ENCODE measurements at regions of chr4 and their contacts with region 1.

Region 1: GRCh38 chr4:81471588-81472288 is at the start of gene RASGEF1B:
- DNase-seq: peak; percentile 84 to 98 (median 92)
- ATAC-seq: peak; percentile 84
- H3K4me3 ChIP-seq: peak within 1 kb of the TSS; percentile 85
- H3K4me3 Mint-ChIP-seq: peak within 1 kb of the TSS; percentile 94
- H3K27ac ChIP-seq: peak within 1 kb of the TSS; percentile 96
- H3K27ac Mint-ChIP-seq: peak within 1 kb of the TSS; percentile 91
- H3K4me1 ChIP-seq: peaks cover 31% of the 10 kb centered on the region
- H3K4me1 Mint-ChIP-seq: peaks cover 41% of the 10 kb centered on the region
- H3K27me3 ChIP-seq: no peaks in the 10 kb centered on the region
- H3K27me3 Mint-ChIP-seq: no peaks in the 10 kb centered on the region
- CTCF ChIP-seq: no peak
- total RNA-seq, gene RASGEF1B: 69.4 to 73.1 TPM

Region 2: DNA sequence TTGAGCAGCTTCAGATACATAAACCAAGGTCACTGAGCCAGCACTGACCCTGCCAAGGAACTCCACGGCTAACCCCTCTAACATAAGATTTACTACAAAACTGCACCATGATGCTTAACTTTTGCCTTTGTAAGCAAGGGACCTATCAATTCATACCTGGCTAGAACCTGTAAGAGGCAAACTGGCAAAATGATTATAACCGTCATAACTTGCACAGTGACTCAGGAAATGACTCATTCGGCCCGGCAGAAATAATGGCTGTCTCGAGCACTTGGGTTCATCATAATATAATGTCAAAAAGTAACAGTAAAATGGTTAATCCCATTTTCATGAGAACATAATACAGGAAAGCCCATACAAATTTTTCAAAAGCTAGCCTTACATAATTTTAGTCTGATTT is 17.2 kb before region 1 on chr4:
- CTCF ChIA-PET with region 1: interaction called, 11 read pairs
- POLR2A ChIA-PET with region 1: interaction called, 3 read pairs
- intact Hi-C with region 1: no loop called
- DNase-seq: peak in 5 of 14 experiments; percentile 23 to 49 (median 46)
- ATAC-seq: peak; percentile 67
- H3K4me3 ChIP-seq: no peak overlapping the region
- H3K4me3 Mint-ChIP-seq: no peak overlapping the region
- H3K27ac ChIP-seq: no peak overlapping the region
- H3K27ac Mint-ChIP-seq: peak overlapping the region; percentile 22
- H3K4me1 ChIP-seq: no peaks in the 10 kb centered on the region
- H3K4me1 Mint-ChIP-seq: peaks cover 14% of the 10 kb centered on the region
- H3K27me3 ChIP-seq: no peaks in the 10 kb centered on the region
- H3K27me3 Mint-ChIP-seq: no peaks in the 10 kb centered on the region
- CTCF ChIP-seq: no peak

Region 3: DNA sequence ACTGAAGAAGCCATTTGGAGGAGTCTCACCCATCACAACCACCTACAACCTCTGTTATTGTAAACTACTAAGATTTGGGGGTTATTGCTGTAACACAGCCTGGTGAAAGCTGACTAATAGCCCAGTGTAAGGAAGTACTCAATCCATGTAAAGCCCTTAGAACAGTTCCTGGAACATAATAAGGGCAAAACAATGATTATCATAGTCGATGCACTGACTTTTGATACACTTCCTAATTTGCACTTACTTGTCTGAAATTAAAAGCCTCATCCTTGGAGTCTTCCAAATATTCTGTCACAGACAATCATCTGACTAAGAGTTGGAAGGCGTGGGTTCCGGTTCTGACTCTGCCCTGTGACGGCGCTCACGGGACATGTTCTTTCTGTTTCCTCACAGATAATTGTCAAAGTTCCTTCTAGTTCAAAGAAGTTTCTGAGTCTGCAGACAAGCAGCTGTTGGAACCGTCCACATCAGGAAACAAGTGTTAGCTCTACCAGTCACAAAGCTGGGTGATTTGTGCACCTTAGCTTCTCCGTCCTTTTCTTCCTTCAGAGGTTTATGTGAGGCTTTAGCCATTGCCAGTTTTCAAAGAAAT is 33.4 kb after region 1 on chr4:
- CTCF ChIA-PET with region 1: interaction called, 8 read pairs
- POLR2A ChIA-PET with region 1: interaction called, 31 read pairs
- intact Hi-C with region 1: loop called in 1 of 2 experiments (anchors 1 kb)
- DNase-seq: peak; percentile 27 to 85 (median 58)
- ATAC-seq: peak; percentile 89
- H3K4me3 ChIP-seq: no peak overlapping the region
- H3K4me3 Mint-ChIP-seq: peak overlapping the region; percentile 52
- H3K27ac ChIP-seq: peak overlapping the region; percentile 47 to 71
- H3K27ac Mint-ChIP-seq: peak overlapping the region; percentile 89
- H3K4me1 ChIP-seq: peaks cover 30% of the 10 kb centered on the region
- H3K4me1 Mint-ChIP-seq: peaks cover 32% of the 10 kb centered on the region
- H3K27me3 ChIP-seq: no peaks in the 10 kb centered on the region
- H3K27me3 Mint-ChIP-seq: no peaks in the 10 kb centered on the region
- CTCF ChIP-seq: no peak

Region 4: GRCh38 chr4:81648576-81649275 is 177.0 kb after region 1 on chr4:
- CTCF ChIA-PET with region 1: interaction called, 4 read pairs
- POLR2A ChIA-PET with region 1: no interaction called
- intact Hi-C with region 1: loop called in 1 of 2 experiments (anchors 10 kb)
- DNase-seq: peak in 11 of 14 experiments; percentile 4 to 67 (median 24)
- ATAC-seq: peak; percentile 96
- H3K4me3 ChIP-seq: no peak overlapping the region
- H3K4me3 Mint-ChIP-seq: peak overlapping the region; percentile 3
- H3K27ac ChIP-seq: no peak overlapping the region
- H3K27ac Mint-ChIP-seq: peak overlapping the region; percentile 5
- H3K4me1 ChIP-seq: peaks cover 4% of the 10 kb centered on the region
- H3K4me1 Mint-ChIP-seq: peaks cover 55% of the 10 kb centered on the region
- H3K27me3 ChIP-seq: no peaks in the 10 kb centered on the region
- H3K27me3 Mint-ChIP-seq: no peaks in the 10 kb centered on the region
- CTCF ChIP-seq: no peak

Region 5: GRCh38 chr4:81844717-81845116 is 373.0 kb after region 1 on chr4:
- CTCF ChIA-PET with region 1: interaction called, 17 read pairs
- POLR2A ChIA-PET with region 1: interaction called, 21 read pairs
- intact Hi-C with region 1: loop called (anchors 1 kb)
- DNase-seq: peak; percentile 38 to 82 (median 58)
- ATAC-seq: peak; percentile 95
- H3K4me3 ChIP-seq: no peak overlapping the region
- H3K4me3 Mint-ChIP-seq: no peak overlapping the region
- H3K27ac ChIP-seq: no peak overlapping the region
- H3K27ac Mint-ChIP-seq: no peak overlapping the region
- H3K4me1 ChIP-seq: no peaks in the 10 kb centered on the region
- H3K4me1 Mint-ChIP-seq: no peaks in the 10 kb centered on the region
- H3K27me3 ChIP-seq: no peaks in the 10 kb centered on the region
- H3K27me3 Mint-ChIP-seq: no peaks in the 10 kb centered on the region
- CTCF ChIP-seq: peak; percentile 77

Region 6: GRCh38 chr4:82268050-82268825 is 796.5 kb after region 1 on chr4:
- CTCF ChIA-PET with region 1: interaction called, 7 read pairs
- POLR2A ChIA-PET with region 1: no interaction called
- intact Hi-C with region 1: loop called (anchors 1 to 2 kb)
- DNase-seq: peak in 12 of 14 experiments; percentile 12 to 76 (median 34)
- ATAC-seq: peak; percentile 92
- H3K4me3 ChIP-seq: no peak overlapping the region
- H3K4me3 Mint-ChIP-seq: peak overlapping the region; percentile 70
- H3K27ac ChIP-seq: no peak overlapping the region
- H3K27ac Mint-ChIP-seq: peak overlapping the region; percentile 11
- H3K4me1 ChIP-seq: peaks cover 18% of the 10 kb centered on the region
- H3K4me1 Mint-ChIP-seq: peaks cover 34% of the 10 kb centered on the region
- H3K27me3 ChIP-seq: no peaks in the 10 kb centered on the region
- H3K27me3 Mint-ChIP-seq: no peaks in the 10 kb centered on the region
- CTCF ChIP-seq: peak; percentile 91

Region 7: DNA sequence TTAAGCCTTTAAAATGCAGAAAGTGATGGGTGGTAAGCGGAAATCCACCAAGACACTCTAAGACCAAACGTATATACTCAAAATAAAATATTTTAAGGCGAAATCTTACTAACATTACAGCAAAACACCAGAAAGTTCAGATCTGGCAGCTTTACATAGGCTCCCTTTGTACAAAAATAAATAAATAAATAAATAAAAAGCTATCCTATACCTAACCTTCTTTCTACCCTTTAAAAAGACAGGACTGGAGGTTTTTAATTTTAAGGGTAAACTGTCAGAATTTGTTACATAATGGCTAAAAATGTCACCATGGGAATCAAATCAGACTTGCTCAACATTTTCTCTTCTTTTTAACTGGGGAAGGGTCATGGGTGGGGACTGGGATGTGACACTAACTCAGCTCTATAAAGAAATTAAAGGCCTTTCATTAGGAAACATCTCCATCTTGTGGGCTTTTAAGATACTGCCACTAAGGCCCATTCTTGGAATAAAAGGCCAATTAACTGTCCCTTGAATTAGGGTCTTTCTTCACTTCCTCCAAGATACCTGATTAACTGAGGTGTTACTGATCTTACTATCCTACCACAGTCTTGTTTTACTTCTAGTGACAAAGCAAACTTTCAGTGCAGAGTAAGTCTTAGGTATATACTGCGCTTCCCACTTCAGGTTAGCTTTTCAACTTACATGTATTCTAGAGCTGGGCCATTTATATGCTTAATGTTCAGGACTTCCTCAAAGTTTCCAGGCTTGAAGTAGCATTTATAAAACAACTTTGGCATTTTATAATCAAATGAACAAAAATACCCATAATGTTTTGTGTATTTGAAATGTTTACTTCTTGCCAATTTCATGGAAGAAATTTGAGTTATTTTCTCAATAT is 888.8 kb after region 1 on chr4:
- CTCF ChIA-PET with region 1: no interaction called
- POLR2A ChIA-PET with region 1: interaction called, 3 read pairs
- intact Hi-C with region 1: loop called (anchors 5 to 10 kb)
- DNase-seq: peak in 3 of 14 experiments; percentile 50 to 61 (median 61)
- ATAC-seq: peak; percentile 80
- H3K4me3 ChIP-seq: no peak overlapping the region
- H3K4me3 Mint-ChIP-seq: peak overlapping the region; percentile 36
- H3K27ac ChIP-seq: peak overlapping the region in 1 of 2 donors; percentile 7
- H3K27ac Mint-ChIP-seq: peak overlapping the region; percentile 60
- H3K4me1 ChIP-seq: peaks cover 25% of the 10 kb centered on the region
- H3K4me1 Mint-ChIP-seq: peaks cover 96% of the 10 kb centered on the region
- H3K27me3 ChIP-seq: peaks cover 0 to 2% of the 10 kb centered on the region in 2 experiments
- H3K27me3 Mint-ChIP-seq: no peaks in the 10 kb centered on the region
- CTCF ChIP-seq: peak; percentile 72